Activated CD8-positive, alpha-beta memory T cell treated with anti-CD3 and anti-CD28 coated beads, Interleukin-2, amount 10 ng/mL, durations not matched to agents 7 days and 5 days (primary cell): ENCODE measurements at regions of chr6 and their contacts with region 1.

Region 1: GRCh38 chr6:41318654-41319565 is 16.5 kb upstream of the NCR2 start:
- DNase-seq: peak; percentile 89
- ATAC-seq: peak; percentile 98
- H3K4me3 Mint-ChIP-seq: peak overlapping the region; percentile 41
- H3K27ac Mint-ChIP-seq: peak overlapping the region; percentile 79
- H3K4me1 Mint-ChIP-seq: peaks cover 21% of the 10 kb centered on the region
- H3K27me3 Mint-ChIP-seq: peaks cover 39% of the 10 kb centered on the region

Region 2: DNA sequence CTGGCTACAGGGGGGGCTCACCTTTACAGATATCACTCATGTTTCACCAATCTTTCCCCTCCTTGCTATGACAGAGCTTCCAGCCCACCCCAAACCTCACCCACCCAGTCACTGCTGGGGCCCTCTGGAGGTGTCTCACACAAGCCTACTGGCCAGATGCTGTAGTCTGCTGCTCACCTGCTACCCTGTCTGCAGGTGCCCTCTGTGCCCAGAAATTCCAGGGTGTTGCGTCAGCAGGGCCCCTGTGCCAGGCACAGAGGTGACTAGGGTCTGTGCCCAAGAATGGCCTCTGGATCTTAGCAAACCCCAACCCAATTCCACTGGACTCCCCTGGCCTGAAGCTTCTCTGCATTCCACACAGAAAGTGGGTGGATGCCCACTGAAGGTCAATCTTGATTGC is 301.2 kb before region 1 on chr6:
- CTCF ChIA-PET with region 1: no interaction called
- DNase-seq: no peak
- ATAC-seq: no peak
- H3K4me3 Mint-ChIP-seq: no peak overlapping the region
- H3K27ac Mint-ChIP-seq: no peak overlapping the region
- H3K4me1 Mint-ChIP-seq: no peaks in the 10 kb centered on the region
- H3K27me3 Mint-ChIP-seq: no peaks in the 10 kb centered on the region

Region 3: DNA sequence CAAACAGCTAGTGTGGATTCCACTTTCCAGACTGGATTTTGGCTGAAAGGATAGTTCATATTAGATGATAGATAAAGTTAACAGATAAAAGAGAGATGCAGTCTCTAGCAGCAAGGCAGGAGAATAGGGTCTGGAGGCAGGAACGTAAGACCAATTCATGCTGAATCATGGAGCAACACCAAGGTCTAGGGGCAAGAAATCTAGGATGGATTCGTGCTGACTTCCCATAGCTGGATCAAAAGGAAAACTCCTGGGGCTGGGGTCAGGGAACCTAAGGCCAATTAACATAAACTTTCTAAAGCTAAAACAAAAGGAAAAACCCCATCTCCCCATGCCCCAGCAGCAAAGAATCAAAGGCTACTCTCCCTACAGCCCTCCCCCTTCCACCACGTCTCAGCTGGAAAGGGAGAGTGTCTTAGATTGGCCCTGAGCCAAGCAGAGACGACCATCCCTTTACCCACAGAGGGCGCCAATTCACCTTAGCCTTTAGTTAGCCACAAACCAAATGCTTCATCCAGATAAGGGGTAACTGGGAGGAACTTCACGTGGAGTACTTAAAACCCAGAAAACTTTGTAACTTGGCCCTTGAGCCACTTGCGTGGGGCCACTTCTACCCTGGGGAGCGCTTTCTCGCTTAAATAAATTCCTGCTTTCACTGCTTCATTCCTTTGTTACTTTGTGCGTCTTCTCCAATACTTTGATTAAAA is 40.1 kb before region 1 on chr6:
- CTCF ChIA-PET with region 1: interaction called, 10 read pairs
- DNase-seq: peak; percentile 75
- ATAC-seq: peak; percentile 69
- H3K4me3 Mint-ChIP-seq: no peak overlapping the region
- H3K27ac Mint-ChIP-seq: no peak overlapping the region
- H3K4me1 Mint-ChIP-seq: peaks cover 5% of the 10 kb centered on the region
- H3K27me3 Mint-ChIP-seq: peaks cover 15% of the 10 kb centered on the region

Region 4: DNA sequence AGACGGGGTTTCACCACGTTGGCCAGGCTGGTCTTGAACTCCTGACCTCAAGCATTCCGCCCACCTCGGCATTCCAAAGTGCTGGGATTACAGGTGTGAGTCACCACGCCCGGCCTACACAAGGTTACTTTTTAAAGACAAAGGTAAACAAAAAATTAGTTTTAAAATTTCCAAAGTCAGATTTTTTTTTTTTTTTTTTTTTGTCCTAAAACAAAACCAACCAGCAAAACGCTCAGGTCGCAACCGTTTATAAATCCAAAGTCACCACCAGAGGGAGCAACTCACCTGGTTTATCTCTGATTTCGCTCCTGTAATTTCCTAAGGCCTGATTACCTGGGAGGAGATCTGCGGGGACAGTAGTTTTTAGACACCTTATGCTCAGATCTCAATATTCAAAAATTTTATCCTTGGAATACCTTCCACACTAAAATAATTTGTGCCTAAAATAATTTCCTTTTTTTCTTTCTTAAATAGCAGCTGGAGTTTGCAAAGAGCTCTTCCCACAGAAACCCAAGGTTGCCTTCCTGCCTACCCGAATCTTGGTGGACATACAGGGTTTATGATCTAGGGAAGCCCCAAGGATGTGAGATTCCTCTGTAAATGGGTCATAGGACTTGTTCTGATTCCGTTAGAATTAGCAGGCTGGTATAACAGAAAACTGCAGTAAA is 12.6 kb before region 1 on chr6:
- CTCF ChIA-PET with region 1: interaction called, 52 read pairs
- DNase-seq: peak; percentile 61
- ATAC-seq: no peak
- H3K4me3 Mint-ChIP-seq: no peak overlapping the region
- H3K27ac Mint-ChIP-seq: no peak overlapping the region
- H3K4me1 Mint-ChIP-seq: peaks cover 2% of the 10 kb centered on the region
- H3K27me3 Mint-ChIP-seq: peaks cover 46% of the 10 kb centered on the region

Region 5: DNA sequence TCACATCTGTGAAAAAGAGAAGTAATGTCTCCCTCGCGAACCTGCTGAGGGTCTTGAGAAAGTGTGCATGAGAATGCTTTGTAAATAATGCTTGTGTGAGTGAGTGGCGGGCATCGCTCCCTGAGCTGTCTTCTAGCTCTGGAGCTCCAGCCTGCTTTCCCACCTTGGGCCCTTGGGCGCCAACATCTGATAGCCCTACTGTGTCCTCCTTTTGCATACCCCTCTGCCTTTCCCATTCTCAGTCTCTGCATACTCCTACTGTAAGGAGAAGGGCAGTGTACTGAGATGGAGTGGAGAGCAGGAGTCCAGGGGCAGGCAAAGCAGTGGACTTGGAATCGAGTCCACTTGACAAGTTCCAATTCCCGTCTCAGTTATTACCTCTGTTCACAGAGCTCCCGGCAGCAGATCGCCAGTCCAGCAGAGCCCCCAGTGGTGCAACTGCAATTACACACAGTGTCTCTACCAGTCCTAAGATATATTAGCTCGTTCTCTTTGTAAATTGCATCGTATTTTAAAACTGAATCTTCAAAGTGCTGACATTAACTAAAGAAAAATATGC is 15.7 kb after region 1 on chr6:
- CTCF ChIA-PET with region 1: interaction called, 104 read pairs
- DNase-seq: no peak
- ATAC-seq: no peak
- H3K4me3 Mint-ChIP-seq: no peak overlapping the region
- H3K27ac Mint-ChIP-seq: peak overlapping the region; percentile 88
- H3K4me1 Mint-ChIP-seq: peaks cover 59% of the 10 kb centered on the region
- H3K27me3 Mint-ChIP-seq: no peaks in the 10 kb centered on the region

Region 6: DNA sequence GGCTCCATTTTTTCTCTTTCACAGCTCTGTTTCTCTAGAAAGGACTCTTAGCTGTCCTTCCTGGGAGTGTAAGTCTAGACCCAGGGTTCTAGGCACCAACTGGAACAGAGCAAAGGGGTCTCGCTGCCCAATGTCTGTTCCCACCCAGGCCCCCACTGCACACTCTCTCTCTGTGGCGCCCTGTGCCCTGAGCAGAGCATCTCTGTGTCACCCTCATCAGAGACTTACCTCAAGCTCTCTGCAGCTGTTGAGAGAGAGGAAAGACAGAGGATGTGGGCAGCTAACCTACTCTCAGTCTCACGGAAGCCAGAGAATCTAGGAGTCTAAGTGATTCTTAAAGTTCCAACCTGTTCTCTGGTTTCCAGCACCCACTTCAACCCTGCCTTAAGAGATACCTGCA is 26.0 kb after region 1 on chr6:
- CTCF ChIA-PET with region 1: interaction called, 16 read pairs
- DNase-seq: peak; percentile 84
- ATAC-seq: peak; percentile 99
- H3K4me3 Mint-ChIP-seq: peak overlapping the region; percentile 60
- H3K27ac Mint-ChIP-seq: peak overlapping the region; percentile 96
- H3K4me1 Mint-ChIP-seq: peaks cover 58% of the 10 kb centered on the region
- H3K27me3 Mint-ChIP-seq: peaks cover 10% of the 10 kb centered on the region